Ascending aorta (tissue), 2 donors: ENCODE measurements at regions of chr1 and their contacts with region 1.

Region 1: GRCh38 chr1:9823943-9824701 is at the start of gene CLSTN1:
- DNase-seq: peak in 1 of 2 donors; percentile 94
- H3K4me3 ChIP-seq: peak within 1 kb of the TSS; percentile 89 to 96
- H3K27ac ChIP-seq: peak within 1 kb of the TSS; percentile 90 to 96
- H3K4me1 ChIP-seq: peaks cover 8 to 19% of the 10 kb centered on the region in 2 donors
- H3K27me3 ChIP-seq: no peaks in the 10 kb centered on the region
- CTCF ChIP-seq: no peak
- total RNA-seq, gene CLSTN1: 84.6 TPM

Region 2: GRCh38 chr1:9798236-9799130 is 25.6 kb before region 1 on chr1:
- intact Hi-C with region 1: loop called (anchors 2 kb)
- DNase-seq: peak in 1 of 2 donors; percentile 68
- H3K4me3 ChIP-seq: peak overlapping the region; percentile 16 to 44
- H3K27ac ChIP-seq: no peak overlapping the region
- H3K4me1 ChIP-seq: peaks cover 4 to 21% of the 10 kb centered on the region in 2 donors
- H3K27me3 ChIP-seq: no peaks in the 10 kb centered on the region
- CTCF ChIP-seq: no peak